Ovary (tissue), 10 donors: ENCODE measurements at regions of chr12 and their contacts with region 1.

Region 1: DNA sequence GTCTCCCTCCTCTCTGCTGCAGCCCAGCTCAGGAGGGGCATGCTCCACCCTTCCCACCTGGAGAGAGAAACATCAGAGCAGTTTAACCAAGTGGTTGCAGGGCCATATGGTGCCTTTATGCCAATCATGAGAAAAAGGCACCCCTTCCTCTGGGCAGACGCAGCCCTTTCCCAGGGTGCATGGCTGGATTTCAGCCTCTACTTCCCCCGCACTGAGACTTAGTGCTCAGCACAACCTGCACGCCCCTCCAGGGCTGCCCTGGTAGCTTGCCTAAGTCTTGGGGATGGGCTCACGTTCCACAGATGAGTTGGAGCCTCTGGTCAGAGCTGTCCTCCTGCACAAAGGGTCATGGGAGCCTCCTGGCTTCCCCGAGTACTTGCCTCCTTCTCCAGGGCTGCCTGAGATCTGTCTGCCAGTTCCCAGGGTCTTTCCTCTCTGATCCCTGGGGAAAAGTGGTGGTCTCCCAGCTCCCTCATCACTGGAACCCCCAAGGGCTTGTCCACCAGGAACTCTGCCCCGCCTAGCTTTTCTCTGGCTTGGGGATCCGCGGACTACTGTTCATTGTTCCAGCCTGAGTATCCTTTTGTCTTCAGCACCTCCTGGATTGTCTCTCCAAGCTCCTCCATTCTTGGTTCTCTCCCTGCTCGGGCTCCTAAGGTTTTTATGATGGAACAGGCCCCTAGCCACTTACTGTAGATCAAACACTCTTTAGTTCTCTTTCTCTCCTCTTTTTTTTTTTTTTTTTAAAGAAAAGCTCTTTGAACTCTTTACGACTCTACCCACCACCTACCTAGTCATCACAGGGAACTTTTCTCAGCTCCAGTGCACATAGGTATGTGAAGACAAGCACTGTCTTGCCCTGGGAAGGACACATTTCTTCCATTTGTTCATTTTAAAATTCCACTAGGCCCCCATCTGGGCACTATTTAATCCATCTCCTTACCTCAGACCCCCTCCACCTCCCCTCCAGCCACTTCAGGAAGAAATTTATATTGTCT is 6.1 kb upstream of the KRT74 start:
- DNase-seq: no peak
- H3K4me3 ChIP-seq: no peak overlapping the region
- H3K27ac ChIP-seq: no peak overlapping the region
- H3K4me1 ChIP-seq: no peaks in the 10 kb centered on the region
- H3K27me3 ChIP-seq: no peaks in the 10 kb centered on the region
- CTCF ChIP-seq: no peak
- EP300 ChIP-seq: no peak
- POLR2A ChIP-seq: no peak

Region 2: GRCh38 chr12:51666696-51667095 is 913.1 kb before region 1 on chr12:
- intact Hi-C with region 1: no loop called
- DNase-seq: no peak
- H3K4me3 ChIP-seq: no peak overlapping the region
- H3K27ac ChIP-seq: no peak overlapping the region
- H3K4me1 ChIP-seq: no peaks in the 10 kb centered on the region
- H3K27me3 ChIP-seq: no peaks in the 10 kb centered on the region
- CTCF ChIP-seq: no peak
- EP300 ChIP-seq: no peak
- POLR2A ChIP-seq: no peak

Region 3: GRCh38 chr12:52362118-52362726 is 217.5 kb before region 1 on chr12:
- intact Hi-C with region 1: loop called in 1 of 4 experiments (anchors 10 kb)
- DNase-seq: no peak
- H3K4me3 ChIP-seq: no peak overlapping the region
- H3K27ac ChIP-seq: no peak overlapping the region
- H3K4me1 ChIP-seq: no peaks in the 10 kb centered on the region
- H3K27me3 ChIP-seq: no peaks in the 10 kb centered on the region
- CTCF ChIP-seq: no peak
- EP300 ChIP-seq: no peak
- POLR2A ChIP-seq: no peak